ENCODE measurements at regions of chr6 and their contacts with region 1.

Region 1: DNA sequence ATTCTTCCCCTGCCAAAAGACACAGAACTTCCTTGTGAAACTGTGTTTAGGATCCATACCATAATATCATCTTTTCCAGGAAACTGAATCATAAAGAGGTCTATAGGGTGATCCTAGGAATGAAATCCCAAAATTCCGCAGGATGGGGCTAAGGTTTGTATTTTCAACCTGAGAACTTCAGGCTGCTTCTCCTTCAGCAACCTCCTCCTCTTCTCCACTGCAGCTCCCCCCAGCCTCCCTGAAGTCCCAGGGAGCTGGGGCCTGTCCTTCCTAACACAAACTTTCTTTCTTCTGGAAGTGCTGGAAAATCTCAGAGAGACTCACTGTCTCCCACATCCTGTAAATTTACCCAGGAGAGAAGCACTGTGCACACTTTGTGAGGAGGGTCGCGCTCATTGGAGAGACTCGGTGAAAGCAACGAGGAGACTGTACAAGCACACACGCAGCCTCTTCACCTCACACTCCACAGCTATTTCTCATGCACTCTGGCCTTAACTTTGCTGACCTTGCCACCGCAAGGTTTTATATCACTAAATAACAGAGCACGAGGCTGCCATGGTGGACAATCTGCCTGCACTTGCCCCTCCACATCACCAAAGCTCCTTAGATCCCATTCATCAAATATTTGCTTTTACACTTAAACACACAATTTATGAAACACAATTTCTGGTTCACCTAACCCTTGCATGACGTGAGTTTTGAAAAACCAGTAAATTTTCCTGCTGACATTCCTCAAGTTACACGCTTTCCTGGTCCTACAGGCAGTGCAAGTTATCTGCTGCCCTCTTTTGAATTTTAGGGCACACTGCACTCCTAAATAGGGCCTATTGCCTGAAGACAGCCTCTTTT is 14.3 kb downstream of the ID4 start:
- DNase-seq: peak; percentile 90
- ATAC-seq: peak; percentile 93
- H3K4me3 ChIP-seq: peak overlapping the region; percentile 28; the same call in 1 of the 2 replicates
- H3K27ac ChIP-seq: peak overlapping the region; percentile 65
- H3K4me1 ChIP-seq: peaks cover 11% of the 10 kb centered on the region
- H3K27me3 ChIP-seq: no peaks in the 10 kb centered on the region
- CTCF ChIP-seq: peak; percentile 96

Region 2: DNA sequence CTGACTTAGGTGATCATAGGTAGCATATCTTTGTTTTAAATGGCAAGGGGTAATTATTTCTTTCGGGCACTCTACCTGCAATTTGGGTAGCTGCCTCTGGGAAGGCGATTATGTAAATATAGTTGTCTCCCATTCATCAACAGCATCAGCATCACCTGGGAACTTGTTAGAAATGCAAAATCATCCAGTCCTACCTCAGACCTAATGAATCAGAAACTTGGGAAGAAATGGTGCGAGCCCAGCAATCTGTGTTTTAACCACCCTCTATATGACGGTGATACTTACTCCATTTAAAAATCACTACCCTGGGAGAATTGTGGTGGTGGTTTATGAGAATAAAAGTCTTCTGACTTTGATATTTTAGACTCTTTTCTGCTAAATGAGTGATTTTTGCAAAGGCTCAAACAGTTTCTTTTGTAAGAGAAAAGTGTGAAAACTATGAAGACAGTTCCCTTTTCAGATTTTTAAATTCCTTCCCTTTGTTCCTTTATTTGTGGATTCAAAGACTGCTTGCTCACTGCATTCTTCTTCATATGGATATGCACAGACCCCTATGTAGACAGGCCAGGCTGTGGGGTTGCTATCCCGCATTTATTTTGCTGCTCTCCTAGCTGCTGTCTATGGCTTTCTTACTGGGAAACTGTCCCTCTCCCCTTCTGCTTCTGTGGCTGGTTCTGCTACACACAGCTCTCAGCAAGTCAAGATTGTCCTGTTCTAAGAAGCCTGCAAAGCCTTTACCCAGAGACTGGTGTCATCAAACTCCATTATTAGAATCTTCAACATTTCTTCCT is 1099.0 kb before region 1 on chr6:
- CTCF ChIA-PET with region 1: no interaction called
- POLR2A ChIA-PET with region 1: no interaction called
- intact Hi-C with region 1: loop called (anchors 2 kb)
- DNase-seq: no peak
- ATAC-seq: no peak
- H3K4me3 ChIP-seq: no peak overlapping the region
- H3K27ac ChIP-seq: no peak overlapping the region
- H3K4me1 ChIP-seq: no peaks in the 10 kb centered on the region
- H3K27me3 ChIP-seq: peaks cover 49% of the 10 kb centered on the region
- CTCF ChIP-seq: no peak

Region 3: DNA sequence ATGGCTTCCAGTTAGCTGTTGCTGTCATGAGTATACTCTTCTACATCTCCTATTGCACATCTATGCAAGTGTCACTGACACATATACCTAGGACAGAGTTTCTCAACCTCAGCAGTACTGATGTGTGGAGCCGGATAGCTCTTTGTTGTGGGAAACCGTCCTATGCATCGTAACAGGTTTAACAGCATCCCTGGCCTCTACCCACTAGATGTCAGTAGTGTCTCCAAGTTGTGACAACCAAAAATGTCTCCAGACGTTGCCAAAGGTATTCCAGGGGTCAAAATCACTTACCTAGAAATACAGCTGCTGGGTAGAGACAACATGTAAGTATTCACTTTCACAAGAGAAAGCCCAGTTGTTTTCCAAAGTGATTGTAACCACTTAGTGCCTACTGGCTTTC is 826.7 kb before region 1 on chr6:
- CTCF ChIA-PET with region 1: no interaction called
- POLR2A ChIA-PET with region 1: no interaction called
- intact Hi-C with region 1: loop called (anchors 2 kb)
- DNase-seq: peak; percentile 81
- ATAC-seq: peak; percentile 91
- H3K4me3 ChIP-seq: no peak overlapping the region
- H3K27ac ChIP-seq: no peak overlapping the region
- H3K4me1 ChIP-seq: peaks cover 9% of the 10 kb centered on the region; the same call in 1 of the 2 replicates
- H3K27me3 ChIP-seq: no peaks in the 10 kb centered on the region
- CTCF ChIP-seq: peak; percentile 85

Region 4: DNA sequence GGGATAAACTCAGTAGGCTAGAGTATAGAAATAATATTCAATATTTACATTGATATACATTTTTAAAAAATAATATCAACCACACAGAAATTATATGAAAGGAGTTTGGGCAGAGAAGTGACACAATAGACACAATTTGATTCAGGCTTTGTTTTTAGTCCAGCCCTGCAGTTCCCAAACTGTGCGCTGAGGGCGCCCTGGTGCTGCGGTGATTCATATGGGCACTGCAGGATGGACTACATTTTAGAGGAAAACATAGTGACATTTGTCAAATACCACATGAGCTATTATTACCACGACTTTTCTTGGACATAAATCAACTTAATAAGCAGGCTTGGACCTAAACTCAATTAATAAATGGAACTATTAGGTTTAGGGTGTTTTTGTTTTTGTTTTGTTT is 378.6 kb before region 1 on chr6:
- CTCF ChIA-PET with region 1: no interaction called
- POLR2A ChIA-PET with region 1: no interaction called
- intact Hi-C with region 1: loop called (anchors 5 kb)
- DNase-seq: peak; percentile 49
- ATAC-seq: no peak
- H3K4me3 ChIP-seq: no peak overlapping the region
- H3K27ac ChIP-seq: peak overlapping the region; percentile 57; the same call in 1 of the 2 replicates
- H3K4me1 ChIP-seq: peaks cover 23% of the 10 kb centered on the region
- H3K27me3 ChIP-seq: no peaks in the 10 kb centered on the region
- CTCF ChIP-seq: peak; percentile 51

Region 5: GRCh38 chr6:20056350-20056992 is 205.0 kb after region 1 on chr6:
- CTCF ChIA-PET with region 1: no interaction called
- POLR2A ChIA-PET with region 1: no interaction called
- intact Hi-C with region 1: loop called (anchors 5 kb)
- DNase-seq: peak; percentile 81
- ATAC-seq: peak; percentile 37; the same call in 1 of the 2 replicates
- H3K4me3 ChIP-seq: no peak overlapping the region
- H3K27ac ChIP-seq: no peak overlapping the region
- H3K4me1 ChIP-seq: no peaks in the 10 kb centered on the region
- H3K27me3 ChIP-seq: no peaks in the 10 kb centered on the region
- CTCF ChIP-seq: peak; percentile 76

Region 6: GRCh38 chr6:21085643-21086042 is 1234.2 kb after region 1 on chr6:
- CTCF ChIA-PET with region 1: no interaction called
- POLR2A ChIA-PET with region 1: no interaction called
- intact Hi-C with region 1: no loop called
- DNase-seq: no peak
- ATAC-seq: no peak
- H3K4me3 ChIP-seq: no peak overlapping the region
- H3K27ac ChIP-seq: no peak overlapping the region
- H3K4me1 ChIP-seq: no peaks in the 10 kb centered on the region
- H3K27me3 ChIP-seq: no peaks in the 10 kb centered on the region
- CTCF ChIP-seq: no peak

Measured in PC-3 (cell line).